Endothelial cell of umbilical vein (primary cell): ENCODE measurements at regions of chr18 and their contacts with region 1.

Region 1: GRCh38 chr18:62637807-62638687 is 77.3 kb upstream of the PHLPP1 start:
- DNase-seq: peak; percentile 18
- H3K4me3 ChIP-seq: no peak overlapping the region
- H3K27ac ChIP-seq: no peak overlapping the region
- H3K4me1 ChIP-seq: no peaks in the 10 kb centered on the region
- H3K27me3 ChIP-seq: peaks cover 3 to 5% of the 10 kb centered on the region in 2 experiments
- CTCF ChIP-seq: peak; percentile 54 to 71
- POLR2A ChIP-seq: no peak

Region 2: DNA sequence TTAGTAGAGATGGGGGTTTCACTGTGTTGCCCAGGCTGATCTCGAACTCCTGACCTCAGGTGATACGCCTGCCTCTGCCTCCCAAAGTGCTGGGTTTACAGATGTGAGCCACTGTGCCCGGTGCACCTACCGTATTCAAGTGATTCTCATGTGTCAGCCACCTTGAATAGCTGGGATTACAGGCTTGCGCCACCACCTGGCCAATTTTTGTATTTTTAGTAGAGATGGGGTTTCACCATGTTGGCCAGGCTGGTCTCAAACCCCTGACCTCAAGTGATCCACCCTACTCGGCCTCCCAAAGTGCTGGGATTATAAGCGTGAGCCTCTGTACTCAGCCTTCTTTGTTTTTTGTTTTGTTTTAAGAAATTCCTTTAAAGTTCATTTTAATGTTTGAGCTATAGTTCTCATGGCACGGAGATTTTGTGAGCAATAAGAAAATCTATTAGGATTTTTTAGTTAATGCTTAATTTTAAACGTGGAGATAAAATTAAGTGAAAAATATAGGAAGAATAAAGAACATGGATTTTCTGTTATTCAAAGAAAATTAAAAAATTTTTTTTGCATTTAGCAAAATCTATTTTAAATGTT is 319.9 kb after region 1 on chr18:
- CTCF ChIA-PET with region 1: interaction called, 27 read pairs
- POLR2A ChIA-PET with region 1: no interaction called
- dilution Hi-C with region 1: no loop called
- intact Hi-C with region 1: loop called (anchors 1 kb)
- DNase-seq: peak; percentile 60
- H3K4me3 ChIP-seq: no peak overlapping the region
- H3K27ac ChIP-seq: no peak overlapping the region
- H3K4me1 ChIP-seq: peaks cover 5% of the 10 kb centered on the region
- H3K27me3 ChIP-seq: no peaks in the 10 kb centered on the region
- CTCF ChIP-seq: peak; percentile 31 to 42
- POLR2A ChIP-seq: no peak

Region 3: GRCh38 chr18:62963507-62963906 is 325.5 kb after region 1 on chr18:
- CTCF ChIA-PET with region 1: interaction called, 27 read pairs
- POLR2A ChIA-PET with region 1: no interaction called
- dilution Hi-C with region 1: no loop called
- intact Hi-C with region 1: loop called (anchors 1 kb)
- DNase-seq: no peak
- H3K4me3 ChIP-seq: no peak overlapping the region
- H3K27ac ChIP-seq: no peak overlapping the region
- H3K4me1 ChIP-seq: no peaks in the 10 kb centered on the region
- H3K27me3 ChIP-seq: no peaks in the 10 kb centered on the region
- CTCF ChIP-seq: no peak
- POLR2A ChIP-seq: no peak